ENCODE measurements at regions of chr11 and their contacts with region 1.

Region 1: DNA sequence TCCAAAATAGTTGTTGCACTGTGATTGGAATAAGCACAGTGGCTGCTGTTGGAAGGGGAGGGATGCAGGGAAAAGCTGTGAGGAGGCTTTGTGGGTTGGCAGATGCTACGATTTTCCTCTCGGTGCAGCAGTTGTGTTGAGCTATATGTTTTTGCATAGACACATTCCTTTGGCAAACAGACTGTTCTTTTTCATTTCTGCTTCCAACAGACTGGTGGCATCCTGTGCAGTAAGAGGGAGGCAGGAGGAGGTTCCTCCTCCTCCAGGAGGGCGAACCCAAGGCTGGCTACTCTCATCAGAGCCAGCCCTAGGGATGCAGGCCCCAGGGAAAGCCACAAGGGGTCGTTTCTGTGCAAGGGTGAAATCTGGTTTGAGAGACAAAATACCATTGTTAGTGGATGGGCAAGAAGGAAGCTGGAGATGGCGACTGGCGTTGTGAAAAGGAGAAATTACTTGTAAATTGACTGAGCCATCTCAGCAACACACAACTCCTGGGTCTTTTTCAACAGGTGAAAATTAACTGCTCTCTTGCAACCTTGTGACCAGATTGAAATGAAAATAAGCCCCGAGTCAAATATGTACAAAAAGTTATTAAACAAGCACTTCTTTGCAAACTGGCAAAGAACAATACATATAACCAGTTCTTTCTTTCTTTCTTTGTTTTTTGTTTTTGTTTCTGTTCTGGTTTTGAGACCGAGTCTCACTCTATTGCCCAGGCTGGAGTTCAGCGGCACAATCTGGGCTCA is 26.5 kb upstream of the UBASH3B start:
- DNase-seq: peak; percentile 83 to 84
- ATAC-seq: peak; percentile 64
- H3K4me3 ChIP-seq: no peak overlapping the region
- H3K27ac ChIP-seq: no peak overlapping the region
- H3K4me1 ChIP-seq: no peaks in the 10 kb centered on the region
- H3K27me3 ChIP-seq: peaks cover 0 to 1% of the 10 kb centered on the region in 2 donors

Region 2: GRCh38 chr11:122697636-122698167 is 68.7 kb after region 1 on chr11:
- intact Hi-C with region 1: no loop called
- DNase-seq: no peak
- ATAC-seq: no peak
- H3K4me3 ChIP-seq: no peak overlapping the region
- H3K27ac ChIP-seq: no peak overlapping the region
- H3K4me1 ChIP-seq: no peaks in the 10 kb centered on the region
- H3K27me3 ChIP-seq: no peaks in the 10 kb centered on the region

Region 3: DNA sequence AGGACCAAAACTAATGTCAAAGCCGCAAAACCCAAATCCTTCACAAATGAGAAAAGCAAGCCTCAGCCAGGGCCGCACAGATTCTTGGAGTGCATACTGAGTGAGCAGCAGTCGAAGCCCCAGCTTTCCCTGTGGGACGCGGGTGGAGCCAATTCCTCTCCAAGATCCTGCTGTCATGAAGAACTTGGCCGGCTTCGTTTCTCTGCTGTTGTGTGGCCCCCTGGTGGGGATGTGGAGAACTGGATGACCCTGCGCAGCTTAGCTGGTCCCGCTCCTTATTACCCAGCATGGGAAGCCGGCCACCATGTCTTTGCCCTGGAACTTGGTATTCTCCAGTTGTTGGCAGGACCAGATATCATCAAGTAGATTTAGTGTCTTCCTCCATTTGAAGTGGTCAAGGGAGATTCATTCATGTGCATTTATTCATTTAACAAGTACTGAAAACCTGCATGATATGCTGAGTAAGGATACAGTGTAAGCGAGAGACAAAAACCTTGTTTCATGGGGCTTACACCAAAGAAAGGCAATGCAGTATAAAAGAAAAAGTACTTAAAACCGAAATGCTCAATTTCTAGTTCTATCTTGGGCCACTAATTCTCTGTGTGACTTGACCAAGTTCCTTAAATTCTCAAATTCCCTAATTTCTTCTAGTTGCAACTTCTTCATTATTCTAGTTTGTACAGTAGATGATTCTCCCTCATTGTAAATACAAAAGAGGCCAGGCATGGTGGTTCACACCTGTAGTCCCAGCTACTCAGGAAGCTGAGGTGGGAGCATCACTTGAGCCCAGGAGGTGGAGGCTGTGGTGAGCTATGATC is 152.6 kb after region 1 on chr11:
- intact Hi-C with region 1: loop called (anchors 2 kb)
- DNase-seq: peak; percentile 90 to 93
- ATAC-seq: peak; percentile 93
- H3K4me3 ChIP-seq: no peak overlapping the region
- H3K27ac ChIP-seq: no peak overlapping the region
- H3K4me1 ChIP-seq: no peaks in the 10 kb centered on the region
- H3K27me3 ChIP-seq: no peaks in the 10 kb centered on the region

Measured in aorta (tissue), 5 donors.